Panc1 (cell line): ENCODE measurements at regions of chr11 and their contacts with region 1.

Region 1: DNA sequence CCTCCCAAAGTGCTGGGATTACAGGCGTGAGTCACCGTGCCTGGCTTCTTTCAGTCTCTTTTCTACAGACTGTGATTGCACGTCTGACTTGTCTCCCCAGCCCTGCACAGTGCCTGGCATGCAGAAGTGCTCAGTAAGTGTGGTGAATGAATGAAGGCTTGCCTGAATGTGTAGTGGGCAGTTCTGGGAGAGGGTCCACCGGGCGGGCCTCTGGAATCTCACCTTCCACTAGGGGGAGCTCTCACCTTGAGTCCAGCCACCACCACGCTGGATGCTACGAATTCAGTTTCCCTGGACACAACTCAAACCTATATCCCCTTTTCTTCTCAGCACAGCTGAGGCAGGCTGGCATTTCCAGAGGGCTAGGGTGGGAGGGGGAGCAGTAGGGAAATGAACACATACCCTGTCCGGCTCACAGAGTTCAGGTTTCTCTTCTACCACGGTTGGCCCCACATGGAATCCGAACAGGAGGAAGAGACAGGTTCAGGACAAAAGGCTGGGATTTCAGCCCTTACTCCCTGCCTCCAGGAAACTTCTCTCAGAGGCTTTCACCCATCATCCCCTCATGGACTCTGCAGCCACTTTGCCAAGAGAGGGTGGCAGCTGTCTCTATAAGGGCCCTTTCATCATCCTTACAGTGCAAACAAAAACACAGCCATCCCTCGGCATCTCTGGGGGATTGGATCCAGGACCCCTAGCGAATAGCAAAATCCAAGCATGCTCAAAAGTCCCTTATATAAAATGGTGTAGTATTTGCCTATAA is 86.8 kb downstream of the NECTIN1 start:
- DNase-seq: peak; percentile 15
- ATAC-seq: peak; percentile 74
- H3K4me3 ChIP-seq: no peak overlapping the region
- H3K27ac ChIP-seq: no peak overlapping the region
- H3K4me1 ChIP-seq: no peaks in the 10 kb centered on the region
- H3K27me3 ChIP-seq: no peaks in the 10 kb centered on the region
- CTCF ChIP-seq: peak; percentile 93

Region 2: GRCh38 chr11:119493712-119494111 is 148.5 kb before region 1 on chr11:
- CTCF ChIA-PET with region 1: interaction called, 10 read pairs
- POLR2A ChIA-PET with region 1: no interaction called
- in situ Hi-C with region 1: no loop called
- intact Hi-C with region 1: no loop called
- DNase-seq: no peak
- ATAC-seq: no peak
- H3K4me3 ChIP-seq: no peak overlapping the region
- H3K27ac ChIP-seq: no peak overlapping the region
- H3K4me1 ChIP-seq: no peaks in the 10 kb centered on the region
- H3K27me3 ChIP-seq: no peaks in the 10 kb centered on the region; the same call in 1 of the 2 replicates
- CTCF ChIP-seq: no peak

Region 3: DNA sequence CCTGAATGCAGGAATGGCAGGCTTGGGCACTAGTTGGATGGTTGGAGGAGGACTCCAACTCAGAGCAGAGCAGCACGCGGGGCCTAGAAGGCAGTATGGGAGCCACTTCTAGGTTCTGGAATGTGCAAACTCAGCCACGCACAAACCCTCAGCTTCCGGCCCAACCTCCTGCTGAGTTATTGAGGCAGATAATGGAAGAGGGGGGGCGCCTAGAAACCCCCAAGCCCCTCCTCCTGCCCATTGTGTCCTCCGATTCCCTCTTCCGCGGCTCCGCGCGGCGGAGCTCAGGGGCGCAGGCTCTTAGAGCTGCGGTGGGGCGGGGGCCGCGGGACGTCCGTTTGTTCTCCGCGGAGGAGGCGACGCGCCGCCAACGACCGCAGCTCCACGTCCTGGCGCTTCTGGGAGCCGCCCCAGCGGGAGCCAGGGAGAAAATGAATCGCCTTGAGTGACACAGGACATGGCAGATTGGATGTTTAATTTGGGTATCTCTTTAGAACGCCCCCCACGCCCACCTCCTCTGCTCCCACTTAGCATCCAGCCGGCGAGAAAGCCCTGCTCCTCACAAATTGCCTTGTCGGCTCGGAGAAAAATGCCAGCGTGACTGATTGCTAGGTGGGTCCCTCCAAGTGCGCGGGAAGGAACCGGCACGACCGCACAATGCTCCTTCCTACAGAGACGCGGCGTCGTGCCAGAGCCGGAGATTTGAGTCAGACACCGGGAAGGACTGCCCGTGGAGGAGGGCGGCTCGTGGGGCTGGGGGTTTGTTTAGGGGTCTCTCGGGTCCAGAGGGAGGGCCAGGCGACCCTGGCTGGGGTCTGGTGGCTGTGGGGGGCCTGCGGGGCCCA is 57.7 kb before region 1 on chr11:
- CTCF ChIA-PET with region 1: no interaction called
- POLR2A ChIA-PET with region 1: no interaction called
- in situ Hi-C with region 1: no loop called
- intact Hi-C with region 1: no loop called
- DNase-seq: no peak
- ATAC-seq: peak; percentile 75
- H3K4me3 ChIP-seq: peak overlapping the region; percentile 39 to 46
- H3K27ac ChIP-seq: no peak overlapping the region
- H3K4me1 ChIP-seq: peaks cover 7% of the 10 kb centered on the region; the same call in 1 of the 2 replicates
- H3K27me3 ChIP-seq: peaks cover 18% of the 10 kb centered on the region
- CTCF ChIP-seq: no peak

Region 4: DNA sequence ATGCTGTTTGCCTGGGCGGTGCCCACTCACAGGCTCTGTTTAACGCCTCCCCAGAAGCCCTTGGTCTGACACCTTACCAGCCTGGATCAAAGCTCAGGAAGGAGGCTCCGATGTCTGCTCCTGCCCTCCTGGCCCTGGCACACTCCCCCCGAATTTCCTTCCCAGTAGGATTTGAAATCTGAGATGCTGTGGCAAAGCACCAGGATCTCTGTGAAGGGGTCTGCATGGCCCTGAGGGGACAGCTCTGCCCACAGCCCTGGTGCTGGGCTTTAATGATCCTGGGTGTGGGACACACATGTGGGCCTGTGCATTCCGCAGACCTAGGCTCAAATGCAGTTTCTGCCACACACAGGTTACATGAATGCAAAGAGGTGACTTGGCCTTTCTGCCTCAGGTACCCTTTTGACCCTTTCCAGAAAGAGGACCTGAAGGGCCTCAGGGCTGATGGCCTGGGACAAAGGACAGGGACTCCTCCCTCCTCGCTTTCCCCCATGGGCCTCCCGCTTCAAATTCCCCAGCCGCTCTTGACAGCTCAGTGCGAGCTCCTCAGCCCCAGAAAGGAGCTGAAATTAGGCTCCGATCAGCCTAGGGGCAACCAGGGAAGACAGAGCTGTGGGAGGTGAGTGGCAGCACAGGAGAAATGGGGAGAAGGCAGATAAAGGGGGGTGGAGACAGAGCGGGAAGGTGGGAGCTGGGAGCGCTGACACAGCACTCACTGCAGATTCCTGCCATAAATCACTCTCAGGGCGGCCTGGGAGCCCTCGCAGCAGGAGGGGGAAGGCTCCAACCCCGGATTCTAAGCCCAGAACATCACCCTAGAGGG is 454.4 kb after region 1 on chr11:
- CTCF ChIA-PET with region 1: interaction called, 10 read pairs
- POLR2A ChIA-PET with region 1: no interaction called
- in situ Hi-C with region 1: no loop called
- intact Hi-C with region 1: no loop called
- DNase-seq: no peak
- ATAC-seq: no peak
- H3K4me3 ChIP-seq: no peak overlapping the region
- H3K27ac ChIP-seq: no peak overlapping the region
- H3K4me1 ChIP-seq: no peaks in the 10 kb centered on the region
- H3K27me3 ChIP-seq: 0 out of 2 replicates have a peak, but pooled peaks cover 6% of the 10 kb centered on the region
- CTCF ChIP-seq: no peak